Left ventricle myocardium superior (tissue), 1 donor: ENCODE measurements at regions of chr9 and their contacts with region 1.

Region 1: DNA sequence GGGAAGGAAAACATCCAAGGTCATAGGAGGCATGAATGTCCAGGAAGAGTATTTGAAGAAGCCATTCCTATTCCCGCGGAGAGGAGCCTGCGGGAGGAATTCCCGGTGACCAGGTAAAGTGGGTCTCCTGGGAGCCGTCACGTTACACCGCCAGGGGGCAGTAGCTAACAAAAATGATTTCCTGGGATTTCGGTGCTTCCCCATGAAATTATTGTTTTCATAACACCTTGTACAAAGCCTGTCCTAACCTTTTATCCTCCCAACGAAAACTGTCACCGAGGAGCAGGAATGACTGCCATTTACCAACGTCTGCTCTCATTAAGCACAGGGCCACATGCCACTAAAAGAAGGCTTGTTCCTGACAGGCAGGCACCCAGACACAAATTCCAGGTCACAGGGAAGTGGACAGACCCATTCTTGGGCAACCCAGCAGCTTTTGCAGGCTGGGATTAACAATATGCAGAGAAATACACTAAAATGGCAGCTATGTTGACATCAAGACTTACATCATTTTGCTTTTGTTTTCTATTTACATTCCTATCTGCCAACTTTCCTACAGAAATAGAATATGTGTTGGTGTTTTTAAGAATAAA is 41.2 kb upstream of the CTSL start:
- DNase-seq: peak; percentile 59
- ATAC-seq: peak; percentile 49

Region 2: DNA sequence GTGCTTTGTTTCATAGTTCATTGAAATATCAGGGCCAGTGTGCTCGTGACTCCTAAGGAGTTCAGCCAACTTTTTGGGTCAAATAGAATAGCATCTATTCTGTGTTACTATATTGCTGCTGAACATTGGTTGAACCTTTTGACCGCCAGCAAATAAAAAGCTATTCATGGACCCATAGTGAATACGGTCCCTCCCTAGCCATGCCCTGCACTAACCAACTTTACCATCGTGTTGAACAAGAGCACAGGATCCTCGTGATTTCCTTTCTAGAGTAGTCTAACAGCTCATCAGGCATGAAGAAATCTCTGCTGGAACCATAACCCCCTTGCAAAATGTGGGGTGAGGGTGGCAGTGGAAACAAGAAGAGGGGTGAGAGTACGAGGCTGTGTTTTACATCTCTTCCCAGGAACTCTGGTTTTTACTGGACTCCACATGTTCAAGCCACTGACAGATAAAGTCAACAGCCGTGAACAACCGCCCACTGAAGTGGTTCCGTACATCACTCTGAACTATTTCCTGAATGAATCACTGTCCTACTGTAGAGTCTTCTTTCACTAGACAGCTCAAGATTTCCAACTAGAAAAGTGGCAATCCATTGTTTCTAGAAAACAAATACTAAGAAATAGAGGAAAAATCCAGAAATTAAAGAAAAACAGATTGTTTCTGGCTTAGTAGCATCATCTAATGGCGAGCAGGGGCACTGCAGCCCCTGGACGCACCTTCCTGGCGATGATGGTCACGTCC is 127.8 kb after region 1 on chr9:
- intact Hi-C with region 1: loop called (anchors 5 kb)
- DNase-seq: no peak
- ATAC-seq: peak; percentile 34